CD8-positive, alpha-beta T cell (primary cell): ENCODE measurements at regions of chr12 and their contacts with region 1.

Region 1: GRCh38 chr12:120649442-120650232 is 9.2 kb downstream of the CABP1 start:
- DNase-seq: no peak
- ATAC-seq: no peak
- H3K4me3 ChIP-seq: no peak overlapping the region
- H3K4me3 Mint-ChIP-seq: no peak overlapping the region
- H3K27ac ChIP-seq: no peak overlapping the region
- H3K27ac Mint-ChIP-seq: no peak overlapping the region
- H3K4me1 ChIP-seq: peaks cover 7% of the 10 kb centered on the region
- H3K4me1 Mint-ChIP-seq: peaks cover 9% of the 10 kb centered on the region
- H3K27me3 ChIP-seq: peaks cover 14 to 21% of the 10 kb centered on the region in 2 experiments
- H3K27me3 Mint-ChIP-seq: peaks cover 47% of the 10 kb centered on the region
- CTCF ChIP-seq: peak; percentile 23

Region 2: DNA sequence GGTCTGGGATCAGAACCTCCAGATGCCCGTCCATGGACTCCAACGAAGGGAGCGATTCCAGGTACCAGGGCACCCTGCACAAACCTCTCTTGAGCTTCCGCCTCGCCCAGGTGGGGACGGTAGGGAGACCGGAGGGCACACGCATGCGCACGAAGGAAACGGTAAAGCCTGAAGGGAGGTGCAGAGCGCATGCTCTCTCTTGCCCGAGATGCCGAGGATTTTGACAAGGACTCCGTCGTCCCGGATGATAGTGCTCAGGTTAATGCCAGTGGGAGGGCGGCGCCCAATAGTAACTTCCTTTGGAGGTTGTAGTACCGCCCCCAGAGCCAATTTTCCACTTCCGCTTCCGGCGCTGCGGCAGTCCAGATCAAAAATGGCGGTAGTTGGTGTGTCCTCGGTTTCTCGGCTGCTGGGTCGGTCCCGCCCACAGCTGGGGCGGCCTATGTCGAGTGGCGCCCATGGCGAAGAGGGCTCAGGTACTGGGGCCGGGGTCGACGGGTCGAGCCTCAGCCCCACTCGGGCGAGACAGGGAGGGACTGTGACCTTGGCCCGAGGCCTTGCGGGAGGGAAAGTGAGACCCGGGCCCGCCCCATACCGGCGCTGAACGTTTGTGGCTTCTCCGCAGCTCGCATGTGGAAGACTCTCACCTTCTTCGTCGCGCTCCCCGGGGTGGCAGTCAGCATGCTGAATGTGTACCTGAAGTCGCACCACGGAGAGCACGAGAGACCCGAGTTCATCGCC is 211.7 kb before region 1 on chr12 and contains the start of gene COX6A1:
- CTCF ChIA-PET with region 1: no interaction called
- POLR2A ChIA-PET with region 1: no interaction called
- intact Hi-C with region 1: loop called (anchors 2 kb)
- DNase-seq: peak; percentile 91 to 100 (median 96)
- ATAC-seq: peak; percentile 95
- H3K4me3 ChIP-seq: peak within 1 kb of the TSS; percentile 74 to 76
- H3K4me3 Mint-ChIP-seq: peak within 1 kb of the TSS; percentile 88
- H3K27ac ChIP-seq: peak within 1 kb of the TSS; percentile 58 to 85
- H3K27ac Mint-ChIP-seq: peak within 1 kb of the TSS; percentile 91
- H3K4me1 ChIP-seq: peaks cover 26% of the 10 kb centered on the region
- H3K4me1 Mint-ChIP-seq: peaks cover 26% of the 10 kb centered on the region
- H3K27me3 ChIP-seq: no peaks in the 10 kb centered on the region
- H3K27me3 Mint-ChIP-seq: peaks cover 3% of the 10 kb centered on the region
- CTCF ChIP-seq: no peak
- total RNA-seq, gene COX6A1: 118 to 124 TPM

Region 3: DNA sequence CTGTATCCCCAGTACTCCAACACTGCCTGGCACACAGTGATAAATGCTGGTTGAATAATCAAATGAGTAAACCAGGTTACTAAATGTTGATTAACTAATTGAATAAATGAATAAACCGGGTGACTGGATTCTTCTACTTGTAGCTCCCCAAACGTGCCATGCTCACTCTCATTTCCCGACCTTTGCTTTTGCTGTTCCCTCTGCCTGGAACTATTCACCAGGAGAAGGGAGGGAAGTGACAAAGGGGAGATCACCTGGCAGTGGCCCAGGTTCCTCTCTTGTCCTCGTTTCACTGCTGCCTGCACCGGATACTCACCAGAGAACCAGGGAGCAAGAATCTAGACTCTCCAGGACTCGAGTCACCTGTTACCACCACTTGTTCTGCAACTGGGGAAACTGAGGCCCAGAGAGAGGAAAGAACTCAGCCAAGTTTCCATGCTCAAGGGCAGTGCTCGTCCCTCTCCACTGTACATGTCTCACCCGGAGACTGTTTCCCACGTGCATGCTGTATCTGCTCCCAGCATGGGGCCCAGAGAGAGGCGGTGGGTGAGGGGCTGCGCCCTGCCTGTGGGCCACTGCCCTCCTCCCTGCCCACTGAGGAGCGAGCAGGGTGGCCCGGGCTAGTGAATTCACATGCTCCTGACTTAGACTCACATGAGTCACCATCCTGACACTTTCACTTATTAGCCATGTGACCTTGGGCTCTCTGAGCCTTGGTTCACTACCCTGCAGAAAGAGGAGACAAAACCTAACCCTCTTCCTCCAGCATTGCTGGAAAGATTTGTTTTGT is 50.8 kb before region 1 on chr12:
- CTCF ChIA-PET with region 1: no interaction called
- POLR2A ChIA-PET with region 1: no interaction called
- intact Hi-C with region 1: no loop called
- DNase-seq: peak in 1 of 9 experiments; percentile 26
- ATAC-seq: no peak
- H3K4me3 ChIP-seq: no peak overlapping the region
- H3K4me3 Mint-ChIP-seq: no peak overlapping the region
- H3K27ac ChIP-seq: no peak overlapping the region
- H3K27ac Mint-ChIP-seq: no peak overlapping the region
- H3K4me1 ChIP-seq: no peaks in the 10 kb centered on the region
- H3K4me1 Mint-ChIP-seq: no peaks in the 10 kb centered on the region
- H3K27me3 ChIP-seq: no peaks in the 10 kb centered on the region
- H3K27me3 Mint-ChIP-seq: peaks cover 10% of the 10 kb centered on the region
- CTCF ChIP-seq: no peak

Region 4: GRCh38 chr12:120669055-120669840 is 19.6 kb after region 1 on chr12:
- CTCF ChIA-PET with region 1: interaction called, 10 read pairs
- POLR2A ChIA-PET with region 1: no interaction called
- intact Hi-C with region 1: no loop called
- DNase-seq: no peak
- ATAC-seq: no peak
- H3K4me3 ChIP-seq: no peak overlapping the region
- H3K4me3 Mint-ChIP-seq: no peak overlapping the region
- H3K27ac ChIP-seq: no peak overlapping the region
- H3K27ac Mint-ChIP-seq: no peak overlapping the region
- H3K4me1 ChIP-seq: no peaks in the 10 kb centered on the region
- H3K4me1 Mint-ChIP-seq: no peaks in the 10 kb centered on the region
- H3K27me3 ChIP-seq: no peaks in the 10 kb centered on the region
- H3K27me3 Mint-ChIP-seq: peaks cover 2% of the 10 kb centered on the region
- CTCF ChIP-seq: no peak

Region 5: GRCh38 chr12:120710031-120710804 is 60.6 kb after region 1 on chr12 and contains the start of gene UNC119B:
- CTCF ChIA-PET with region 1: interaction called, 62 read pairs
- POLR2A ChIA-PET with region 1: interaction called, 3 read pairs
- intact Hi-C with region 1: loop called (anchors 1 kb)
- DNase-seq: peak; percentile 38 to 85 (median 77)
- ATAC-seq: peak; percentile 88
- H3K4me3 ChIP-seq: peak within 1 kb of the TSS; percentile 64 to 68
- H3K4me3 Mint-ChIP-seq: peak within 1 kb of the TSS; percentile 93
- H3K27ac ChIP-seq: peak within 1 kb of the TSS; percentile 40 to 70
- H3K27ac Mint-ChIP-seq: peak within 1 kb of the TSS; percentile 89
- H3K4me1 ChIP-seq: peaks cover 22% of the 10 kb centered on the region
- H3K4me1 Mint-ChIP-seq: peaks cover 37% of the 10 kb centered on the region
- H3K27me3 ChIP-seq: no peaks in the 10 kb centered on the region
- H3K27me3 Mint-ChIP-seq: no peaks in the 10 kb centered on the region
- CTCF ChIP-seq: no peak
- total RNA-seq, gene UNC119B: 8.1 to 8.4 TPM

Region 6: DNA sequence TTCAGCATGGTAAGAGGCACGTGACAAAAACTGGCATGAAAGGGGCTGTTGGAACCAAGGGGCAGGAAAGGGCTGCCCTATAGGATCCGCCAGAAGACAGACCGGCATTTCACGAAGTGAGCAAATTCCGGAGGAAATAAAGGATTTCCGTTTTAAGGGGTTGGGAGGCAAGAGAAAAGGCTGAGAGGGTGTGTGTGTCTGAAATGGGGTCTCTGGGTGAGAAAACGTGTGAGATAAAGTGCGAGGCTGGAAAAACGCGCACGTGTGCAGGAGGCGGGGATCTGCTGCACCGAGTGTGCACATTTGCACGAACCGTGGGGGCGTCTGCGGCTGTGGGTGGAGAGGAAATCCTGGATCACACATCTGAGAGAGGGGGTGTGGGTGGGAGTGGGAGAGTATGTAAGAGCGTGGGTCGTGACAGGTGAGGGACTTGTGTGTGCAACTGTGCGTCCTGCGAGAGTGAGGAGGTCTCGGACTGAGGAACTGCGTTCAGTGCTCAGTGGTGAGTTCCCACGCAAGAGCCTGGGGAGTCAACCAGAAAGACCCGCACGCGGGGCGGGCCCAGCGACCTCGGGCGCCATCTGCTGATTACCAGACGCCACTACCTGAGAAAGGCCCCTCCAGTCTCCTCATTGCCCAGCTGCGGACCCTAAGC is 446.0 kb after region 1 on chr12:
- CTCF ChIA-PET with region 1: interaction called, 4 read pairs
- POLR2A ChIA-PET with region 1: no interaction called
- intact Hi-C with region 1: loop called in 1 of 2 experiments (anchors 5 kb)
- DNase-seq: peak; percentile 59 to 88 (median 81)
- ATAC-seq: peak; percentile 78
- H3K4me3 ChIP-seq: peak overlapping the region; percentile 44 to 47
- H3K4me3 Mint-ChIP-seq: peak overlapping the region; percentile 81
- H3K27ac ChIP-seq: no peak overlapping the region
- H3K27ac Mint-ChIP-seq: no peak overlapping the region
- H3K4me1 ChIP-seq: peaks cover 47% of the 10 kb centered on the region
- H3K4me1 Mint-ChIP-seq: peaks cover 49% of the 10 kb centered on the region
- H3K27me3 ChIP-seq: no peaks in the 10 kb centered on the region
- H3K27me3 Mint-ChIP-seq: no peaks in the 10 kb centered on the region
- CTCF ChIP-seq: peak; percentile 81